ENCODE measurements at regions of chr19 and their contacts with region 1.

Region 1: GRCh38 chr19:54390942-54391577 is 24.2 kb upstream of the TTYH1 start:
- DNase-seq: peak in 1 of 2 experiments; percentile 80
- ATAC-seq: peak; percentile 49 to 69; a peak in 4 of 6 replicates
- H3K4me3 ChIP-seq: no peak overlapping the region
- H3K27ac ChIP-seq: no peak overlapping the region
- H3K4me1 ChIP-seq: 0 out of 3 replicates have a peak, but pooled peaks cover 5% of the 10 kb centered on the region
- CTCF ChIP-seq: peak; percentile 88
- EP300 ChIP-seq: no peak
- POLR2A ChIP-seq: no peak
- RAD21 ChIP-seq: peak; percentile 80 to 83

Region 2: GRCh38 chr19:53792721-53793433 is 598.2 kb before region 1 on chr19:
- CTCF ChIA-PET with region 1: interaction called, 12 read pairs
- POLR2A ChIA-PET with region 1: no interaction called
- DNase-seq: peak; percentile 73 to 92
- ATAC-seq: peak; percentile 97 to 99
- H3K4me3 ChIP-seq: no peak overlapping the region
- H3K27ac ChIP-seq: no peak overlapping the region
- H3K4me1 ChIP-seq: no peaks in the 10 kb centered on the region
- CTCF ChIP-seq: peak; percentile 98
- EP300 ChIP-seq: no peak
- POLR2A ChIP-seq: no peak
- RAD21 ChIP-seq: peak; percentile 84 to 95

Region 3: DNA sequence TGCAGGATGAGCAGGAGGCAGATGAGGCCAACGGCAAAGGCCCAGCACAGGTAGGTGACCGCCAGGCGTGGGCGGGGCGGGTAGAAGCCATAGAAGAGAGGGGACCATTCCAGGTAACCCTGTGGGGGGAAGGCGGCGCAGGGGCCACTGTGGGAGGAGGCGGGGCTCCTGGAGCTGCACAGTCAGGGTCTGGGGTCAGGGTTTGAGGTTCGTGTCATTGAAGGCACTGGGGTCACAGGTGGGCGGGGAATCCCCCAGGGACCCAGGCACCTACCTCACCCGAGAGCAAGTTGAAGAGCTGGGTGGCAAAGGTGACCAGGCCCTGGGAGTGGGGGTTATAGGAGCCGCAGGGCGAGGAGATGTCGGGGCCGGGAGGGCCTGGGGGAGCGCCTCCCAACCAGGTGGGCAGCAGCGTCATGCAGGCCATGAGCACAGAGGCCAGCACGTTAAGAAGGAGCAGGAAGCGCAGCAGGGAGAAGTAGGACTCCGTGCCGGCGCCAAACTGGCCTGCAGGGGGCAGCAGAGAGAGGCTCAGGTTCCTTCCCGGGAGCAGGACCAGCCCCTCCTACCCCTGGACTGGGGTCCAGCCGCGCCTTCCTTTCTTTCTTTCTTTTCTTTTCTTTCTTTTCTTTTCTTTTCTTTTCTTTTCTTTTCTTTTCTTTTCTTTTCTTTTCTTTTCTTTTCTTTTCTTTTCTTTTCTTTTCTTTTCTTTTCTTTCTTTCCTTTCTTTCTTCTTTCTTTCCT is 222.7 kb before region 1 on chr19:
- CTCF ChIA-PET with region 1: interaction called, 33 read pairs
- POLR2A ChIA-PET with region 1: no interaction called
- DNase-seq: peak; percentile 92 to 95
- ATAC-seq: peak; percentile 82 to 87
- H3K4me3 ChIP-seq: no peak overlapping the region
- H3K27ac ChIP-seq: peak overlapping the region in 1 of 2 experiments; percentile 52; a peak in 2 of 6 replicates
- H3K4me1 ChIP-seq: peaks cover 14% of the 10 kb centered on the region; the same call in 2 of the 3 replicates
- CTCF ChIP-seq: peak; percentile 79
- EP300 ChIP-seq: no peak
- POLR2A ChIP-seq: no peak
- RAD21 ChIP-seq: peak; percentile 71 to 73

Region 4: GRCh38 chr19:54316746-54317107 is 74.3 kb before region 1 on chr19:
- CTCF ChIA-PET with region 1: interaction called, 17 read pairs
- POLR2A ChIA-PET with region 1: no interaction called
- DNase-seq: peak in 1 of 2 experiments; percentile 48
- ATAC-seq: peak in 1 of 2 experiments; percentile 48; a peak in 4 of 6 replicates
- H3K4me3 ChIP-seq: no peak overlapping the region
- H3K27ac ChIP-seq: no peak overlapping the region
- H3K4me1 ChIP-seq: no peaks in the 10 kb centered on the region
- CTCF ChIP-seq: no peak
- EP300 ChIP-seq: no peak
- POLR2A ChIP-seq: no peak
- RAD21 ChIP-seq: no peak

Region 5: GRCh38 chr19:54352041-54352440 is 39.0 kb before region 1 on chr19:
- CTCF ChIA-PET with region 1: interaction called, 12 read pairs
- POLR2A ChIA-PET with region 1: no interaction called
- DNase-seq: no peak
- ATAC-seq: no peak; a peak in 1 of 6 replicates
- H3K4me3 ChIP-seq: no peak overlapping the region
- H3K27ac ChIP-seq: no peak overlapping the region
- H3K4me1 ChIP-seq: no peaks in the 10 kb centered on the region
- CTCF ChIP-seq: no peak
- EP300 ChIP-seq: no peak
- POLR2A ChIP-seq: no peak
- RAD21 ChIP-seq: no peak

Region 6: DNA sequence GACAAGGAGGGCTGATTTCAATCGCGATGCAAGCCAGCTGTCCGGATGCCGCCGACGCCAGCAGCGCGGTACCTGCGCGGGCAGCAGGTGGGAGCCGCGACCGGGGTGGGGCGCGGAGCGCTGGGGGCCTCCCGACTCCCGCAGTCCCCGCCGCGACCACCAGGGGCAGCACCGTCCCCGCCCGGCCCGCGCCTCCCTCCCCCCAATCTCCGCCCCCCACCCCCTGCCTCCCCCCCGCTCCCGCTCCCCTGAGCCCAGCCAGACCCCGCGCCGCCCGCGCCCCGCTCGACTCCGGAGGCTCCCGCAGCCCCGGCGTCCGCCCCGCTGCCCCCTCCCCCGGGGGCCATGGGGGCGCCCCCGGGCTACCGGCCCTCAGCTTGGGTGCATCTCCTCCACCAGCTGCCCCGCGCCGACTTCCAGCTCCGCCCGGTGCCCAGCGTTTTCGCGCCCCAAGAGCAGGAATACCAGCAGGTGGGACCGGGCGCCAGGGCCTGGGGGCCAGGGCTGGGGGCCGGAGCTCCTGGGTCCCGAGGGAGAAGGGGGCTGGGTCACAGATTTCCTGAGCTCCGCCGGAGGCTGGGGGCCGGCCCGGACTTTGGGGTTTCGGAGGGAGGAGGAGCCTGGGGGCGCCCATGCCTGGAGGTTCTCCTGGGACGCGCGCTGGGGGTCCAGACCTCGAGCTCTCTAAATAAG is 24.3 kb after region 1 on chr19 and contains the start of gene TTYH1:
- CTCF ChIA-PET with region 1: interaction called, 45 read pairs
- POLR2A ChIA-PET with region 1: no interaction called
- DNase-seq: no peak
- ATAC-seq: peak in 1 of 2 experiments; percentile 48; a peak in 3 of 6 replicates
- H3K4me3 ChIP-seq: no peak within 1 kb of the TSS
- H3K27ac ChIP-seq: no peak within 1 kb of the TSS
- H3K4me1 ChIP-seq: peaks cover 10% of the 10 kb centered on the region; the same call in 2 of the 3 replicates
- CTCF ChIP-seq: peak; percentile 24; the same call in 2 of the 3 replicates
- EP300 ChIP-seq: no peak
- POLR2A ChIP-seq: no peak
- RAD21 ChIP-seq: no peak
- polyA plus RNA-seq, gene TTYH1: 0.31 and 0.56 TPM in 2 replicates

Region 7: GRCh38 chr19:54439174-54439853 is 48.3 kb after region 1 on chr19:
- CTCF ChIA-PET with region 1: interaction called, 25 read pairs
- POLR2A ChIA-PET with region 1: no interaction called
- DNase-seq: peak; percentile 64 to 69
- ATAC-seq: peak; percentile 89 to 95
- H3K4me3 ChIP-seq: no peak overlapping the region
- H3K27ac ChIP-seq: no peak overlapping the region
- H3K4me1 ChIP-seq: no peaks in the 10 kb centered on the region
- CTCF ChIP-seq: peak; percentile 51
- EP300 ChIP-seq: no peak
- POLR2A ChIP-seq: no peak
- RAD21 ChIP-seq: peak in 1 of 2 experiments; percentile 51; a peak in 2 of 5 replicates

Region 8: GRCh38 chr19:54492568-54492967 is 101.5 kb after region 1 on chr19:
- CTCF ChIA-PET with region 1: no interaction called
- POLR2A ChIA-PET with region 1: no interaction called
- DNase-seq: no peak
- ATAC-seq: no peak
- H3K4me3 ChIP-seq: no peak overlapping the region
- H3K27ac ChIP-seq: no peak overlapping the region
- H3K4me1 ChIP-seq: no peaks in the 10 kb centered on the region
- CTCF ChIP-seq: no peak
- EP300 ChIP-seq: no peak
- POLR2A ChIP-seq: no peak
- RAD21 ChIP-seq: no peak